Activated B cell treated with CpG ODN at 0.5 μM for 24 hours (primary cell): ENCODE measurements at regions of chr9 and their contacts with region 1.

Region 1: DNA sequence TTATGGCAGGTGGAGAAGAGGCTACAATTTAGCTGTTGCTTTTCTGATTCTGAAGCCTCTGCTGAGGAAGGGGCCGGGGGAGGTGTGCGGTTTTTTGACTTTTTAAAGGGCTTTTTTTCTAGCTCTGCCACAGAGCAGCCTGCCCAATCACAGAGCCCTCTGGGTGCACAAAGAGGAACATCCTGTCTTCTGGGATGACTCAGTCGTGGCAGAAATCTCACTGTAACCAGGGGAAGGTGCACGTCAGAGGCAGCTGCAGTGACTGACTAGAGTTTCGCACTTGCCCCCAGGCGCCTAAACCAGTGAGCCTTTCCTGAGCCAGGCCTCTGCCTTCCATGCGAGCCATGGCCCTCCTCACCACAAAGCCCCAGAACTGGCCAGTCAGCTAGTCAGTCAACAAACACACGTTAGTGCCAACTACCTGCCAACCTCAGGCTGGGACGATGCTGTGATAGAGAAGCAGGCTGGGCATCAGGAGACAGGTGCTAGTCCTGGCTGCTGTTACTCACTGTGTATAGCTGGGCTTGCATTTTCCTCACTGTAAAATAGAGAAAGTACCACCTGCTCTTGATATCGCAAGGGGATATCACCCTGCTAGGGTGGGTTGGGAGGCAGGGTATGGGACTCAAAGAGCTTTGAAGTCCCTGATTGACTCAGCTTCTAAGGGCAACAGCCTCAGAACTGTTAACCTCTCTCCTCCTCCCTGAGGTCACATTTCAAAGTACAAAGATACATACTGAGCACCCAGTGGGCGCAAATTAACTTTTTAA is 2.2 kb downstream of the AKNA start:
- DNase-seq: peak; percentile 71
- ATAC-seq: peak; percentile 77
- H3K4me3 Mint-ChIP-seq: peak overlapping the region; percentile 97
- H3K27ac Mint-ChIP-seq: peak overlapping the region; percentile 93
- H3K4me1 Mint-ChIP-seq: peaks cover 85% of the 10 kb centered on the region
- H3K27me3 Mint-ChIP-seq: no peaks in the 10 kb centered on the region
- CTCF ChIP-seq: no peak

Region 2: DNA sequence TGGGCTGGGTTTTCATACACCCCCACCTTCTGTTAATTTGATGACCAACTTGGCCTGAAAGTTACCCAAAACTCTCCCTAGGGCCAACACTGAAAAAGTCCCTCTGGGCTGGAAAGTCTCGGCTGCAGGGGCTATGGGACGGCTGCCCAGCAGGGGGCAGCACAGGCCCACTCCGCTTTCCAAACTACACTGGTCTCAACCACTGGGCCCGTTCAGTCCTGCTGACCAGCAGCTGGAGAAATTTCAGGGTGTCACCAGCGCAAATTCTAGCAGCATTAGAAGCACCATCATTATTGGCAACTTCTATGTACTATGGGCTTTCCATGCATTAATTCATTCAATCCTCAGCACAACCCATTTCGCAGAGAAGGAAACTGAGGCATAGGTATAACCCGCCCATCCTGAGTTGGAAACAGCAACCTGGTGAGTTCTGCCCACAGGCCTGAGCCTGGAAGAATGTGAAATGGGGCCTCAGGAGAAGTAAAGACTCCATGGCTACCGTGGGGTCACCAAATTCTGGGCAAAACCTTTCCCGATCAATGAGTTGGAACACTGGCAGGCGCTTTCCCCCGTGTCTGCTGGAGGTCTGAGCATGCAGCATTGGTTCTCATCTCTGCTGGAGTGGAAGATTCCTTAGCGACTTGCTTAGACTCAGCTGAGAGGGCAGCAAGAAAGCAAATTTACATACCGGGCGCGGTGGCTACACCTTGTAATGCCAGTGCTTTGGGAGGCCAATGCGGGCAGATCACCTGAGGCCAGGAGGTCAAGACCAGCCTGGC is 46.3 kb before region 1 on chr9:
- CTCF ChIA-PET with region 1: interaction called, 13 read pairs
- POLR2A ChIA-PET with region 1: interaction called, 188 read pairs
- intact Hi-C with region 1: loop called (anchors 1 kb)
- DNase-seq: peak; percentile 68
- ATAC-seq: peak; percentile 79
- H3K4me3 Mint-ChIP-seq: peak overlapping the region; percentile 6
- H3K27ac Mint-ChIP-seq: peak overlapping the region; percentile 74
- H3K4me1 Mint-ChIP-seq: peaks cover 32% of the 10 kb centered on the region
- H3K27me3 Mint-ChIP-seq: no peaks in the 10 kb centered on the region
- CTCF ChIP-seq: peak; percentile 87

Region 3: GRCh38 chr9:114348906-114349482 is 36.6 kb before region 1 on chr9:
- CTCF ChIA-PET with region 1: interaction called, 6 read pairs
- POLR2A ChIA-PET with region 1: interaction called, 188 read pairs
- intact Hi-C with region 1: loop called (anchors 1 kb)
- DNase-seq: peak; percentile 77
- ATAC-seq: peak; percentile 94
- H3K4me3 Mint-ChIP-seq: peak overlapping the region; percentile 58
- H3K27ac Mint-ChIP-seq: peak overlapping the region; percentile 94
- H3K4me1 Mint-ChIP-seq: peaks cover 44% of the 10 kb centered on the region
- H3K27me3 Mint-ChIP-seq: no peaks in the 10 kb centered on the region
- CTCF ChIP-seq: no peak

Region 4: GRCh38 chr9:114366334-114367128 is 19.1 kb before region 1 on chr9:
- CTCF ChIA-PET with region 1: interaction called, 46 read pairs
- POLR2A ChIA-PET with region 1: interaction called, 913 read pairs
- intact Hi-C with region 1: loop called (anchors 1 kb)
- DNase-seq: no peak
- ATAC-seq: peak; percentile 41
- H3K4me3 Mint-ChIP-seq: peak overlapping the region; percentile 69
- H3K27ac Mint-ChIP-seq: peak overlapping the region; percentile 91
- H3K4me1 Mint-ChIP-seq: peaks cover 90% of the 10 kb centered on the region
- H3K27me3 Mint-ChIP-seq: no peaks in the 10 kb centered on the region
- CTCF ChIP-seq: no peak

Region 5: DNA sequence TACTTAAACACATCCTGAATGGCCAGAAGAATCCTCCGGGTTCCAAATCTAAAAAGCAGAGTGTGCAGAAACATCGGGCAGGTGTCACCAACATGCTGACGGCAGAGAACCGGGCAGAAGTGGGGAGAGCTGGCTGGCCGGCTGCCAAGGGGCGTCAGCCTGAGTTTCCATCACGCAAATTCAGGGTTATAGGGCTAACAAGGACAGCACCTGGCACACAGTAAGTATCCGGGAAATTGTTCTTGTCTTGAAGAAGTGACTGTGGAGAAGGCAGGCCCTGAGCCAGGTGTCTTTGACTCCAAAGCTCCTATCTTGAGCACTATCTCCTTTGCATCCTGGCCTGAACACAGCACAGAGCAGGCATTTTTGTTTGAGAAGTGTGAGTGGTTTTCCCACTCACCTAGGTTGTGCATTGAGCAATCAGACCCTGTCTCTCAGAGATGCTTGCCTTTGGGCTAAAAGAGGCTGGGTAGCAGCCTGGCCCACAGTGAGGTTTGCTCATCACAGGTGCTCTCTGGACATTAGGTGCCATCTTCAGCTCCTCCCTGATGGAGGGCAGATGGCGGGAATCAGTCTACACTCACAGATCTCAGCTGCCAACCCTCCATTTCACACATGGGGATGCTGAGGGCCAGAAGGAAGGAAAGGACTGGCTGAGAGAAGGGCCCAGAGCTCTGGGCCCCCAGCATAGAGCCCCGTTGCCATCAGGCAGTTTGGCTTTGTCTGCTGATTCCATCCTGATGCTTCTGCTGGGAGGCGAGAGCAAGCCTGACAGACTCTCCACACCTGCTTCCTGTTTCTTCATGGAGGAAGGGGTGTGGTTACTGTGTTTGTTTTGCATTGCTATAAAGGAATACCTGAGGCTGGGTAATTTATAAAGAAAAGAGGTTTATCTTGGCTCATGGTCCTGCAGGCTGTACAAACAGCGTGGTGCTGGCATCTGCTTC is 66.9 kb after region 1 on chr9:
- CTCF ChIA-PET with region 1: no interaction called
- POLR2A ChIA-PET with region 1: interaction called, 12 read pairs
- intact Hi-C with region 1: no loop called
- DNase-seq: peak; percentile 61
- ATAC-seq: peak; percentile 35
- H3K4me3 Mint-ChIP-seq: peak overlapping the region; percentile 55
- H3K27ac Mint-ChIP-seq: peak overlapping the region; percentile 95
- H3K4me1 Mint-ChIP-seq: peaks cover 61% of the 10 kb centered on the region
- H3K27me3 Mint-ChIP-seq: no peaks in the 10 kb centered on the region
- CTCF ChIP-seq: no peak

Region 6: GRCh38 chr9:114611516-114612271 is 226.1 kb after region 1 on chr9:
- CTCF ChIA-PET with region 1: no interaction called
- POLR2A ChIA-PET with region 1: interaction called, 12 read pairs
- intact Hi-C with region 1: loop called (anchors 5 kb)
- DNase-seq: no peak
- ATAC-seq: peak; percentile 51
- H3K4me3 Mint-ChIP-seq: peak overlapping the region; percentile 90
- H3K27ac Mint-ChIP-seq: peak overlapping the region; percentile 95
- H3K4me1 Mint-ChIP-seq: peaks cover 85% of the 10 kb centered on the region
- H3K27me3 Mint-ChIP-seq: no peaks in the 10 kb centered on the region
- CTCF ChIP-seq: no peak

Region 7: DNA sequence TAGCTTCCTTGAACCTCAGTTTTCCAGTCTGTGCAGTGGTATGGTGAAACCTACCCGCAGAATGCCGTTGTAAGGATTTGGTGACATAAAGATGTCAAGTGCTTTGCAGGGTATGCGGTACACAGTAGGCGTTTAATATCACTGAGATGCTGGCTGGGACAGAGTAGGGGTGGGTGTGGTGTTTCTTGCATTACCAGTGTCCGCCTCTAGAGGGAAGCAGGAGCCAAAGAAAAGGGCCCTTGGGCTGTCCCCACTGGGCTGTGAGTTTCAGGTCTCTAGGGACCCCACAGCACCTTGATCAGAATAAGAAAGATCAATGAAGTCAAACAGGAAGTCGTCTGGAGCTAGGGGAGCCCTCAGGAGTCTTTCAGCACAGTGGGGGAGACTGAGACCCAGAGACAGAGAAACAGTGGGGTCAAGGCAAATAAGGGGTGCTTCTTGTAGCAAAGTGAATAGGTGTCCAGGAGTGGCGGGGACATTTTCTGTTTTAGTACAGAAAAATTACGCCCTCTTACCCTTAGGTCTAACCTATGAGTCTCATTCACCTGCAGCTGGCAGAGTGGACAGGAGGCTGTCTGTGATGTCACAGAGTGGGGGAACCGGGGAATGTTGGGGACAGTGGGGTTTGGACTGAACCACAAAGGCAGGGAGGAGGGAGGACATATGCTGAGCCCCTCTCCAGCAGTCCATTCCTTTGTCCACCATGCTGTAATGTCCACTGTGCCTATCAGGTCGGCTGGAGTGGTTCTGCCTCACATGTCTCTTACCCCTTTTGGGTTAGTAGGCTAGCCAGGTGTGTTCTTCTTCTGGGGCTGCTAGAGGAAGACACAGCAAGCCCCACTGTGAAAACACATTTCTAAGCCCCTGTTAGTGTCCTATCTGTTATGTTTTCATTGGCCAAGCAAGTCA is 276.7 kb after region 1 on chr9:
- CTCF ChIA-PET with region 1: no interaction called
- POLR2A ChIA-PET with region 1: no interaction called
- intact Hi-C with region 1: no loop called
- DNase-seq: peak; percentile 37
- ATAC-seq: peak; percentile 100
- H3K4me3 Mint-ChIP-seq: no peak overlapping the region
- H3K27ac Mint-ChIP-seq: no peak overlapping the region
- H3K4me1 Mint-ChIP-seq: peaks cover 6% of the 10 kb centered on the region
- H3K27me3 Mint-ChIP-seq: no peaks in the 10 kb centered on the region
- CTCF ChIP-seq: peak; percentile 45